Activated CD4-positive, alpha-beta memory T cell treated with anti-CD3 and anti-CD28 coated beads for 36 hours (primary cell): ENCODE measurements at regions of chr10 and their contacts with region 1.

Region 1: GRCh38 chr10:43348511-43349312 is 22.7 kb upstream of the FXYD4 start:
- DNase-seq: peak; percentile 92
- H3K4me3 Mint-ChIP-seq: no peak overlapping the region
- H3K27ac Mint-ChIP-seq: no peak overlapping the region
- H3K4me1 Mint-ChIP-seq: peaks cover 16% of the 10 kb centered on the region
- H3K27me3 Mint-ChIP-seq: peaks cover 12% of the 10 kb centered on the region

Region 2: DNA sequence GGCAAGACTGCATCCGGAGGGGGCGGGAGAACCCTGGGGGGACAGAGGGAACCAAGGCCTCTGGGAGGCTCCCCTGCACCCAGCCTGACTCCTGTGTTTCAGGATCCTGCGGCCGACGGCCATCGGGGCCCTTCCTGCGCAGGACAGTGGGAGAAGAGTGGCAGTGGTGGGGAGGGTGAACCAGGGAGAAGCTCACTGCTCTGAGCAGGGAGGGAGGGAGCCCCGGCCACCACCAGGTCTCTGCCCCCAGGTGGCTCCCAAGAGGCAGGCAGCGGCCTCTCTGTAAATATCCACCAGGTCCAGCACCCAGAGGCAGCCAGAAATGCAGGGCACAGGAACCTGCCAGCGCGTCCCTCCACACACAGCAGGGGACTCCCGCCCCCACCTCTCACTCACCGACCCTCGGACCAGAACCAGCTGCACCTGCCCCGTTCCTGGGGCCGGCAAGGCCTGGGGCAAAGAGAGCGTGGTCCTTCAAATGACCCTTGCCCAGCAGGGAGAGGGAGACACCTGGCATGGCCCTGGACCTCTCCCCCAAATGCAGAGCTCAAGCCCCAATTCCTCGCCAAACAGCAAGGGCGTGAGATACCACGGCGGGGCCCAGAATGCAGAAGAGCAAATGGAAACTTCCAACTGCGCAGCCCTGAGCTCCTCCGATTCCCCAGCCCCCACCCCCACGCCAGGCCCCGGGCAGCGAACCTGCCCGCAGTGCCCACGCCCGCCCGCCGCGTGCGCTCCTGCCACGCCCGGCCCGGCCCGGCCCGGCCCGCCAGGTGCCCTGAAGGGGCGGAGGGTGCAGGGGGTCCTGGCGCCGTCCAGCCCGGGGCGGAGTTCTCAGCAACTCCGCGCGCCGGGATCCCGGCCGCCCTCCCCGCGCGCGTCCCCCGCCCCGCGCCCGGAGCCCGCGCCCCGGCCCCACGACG is 82.7 kb before region 1 on chr10:
- CTCF ChIA-PET with region 1: interaction called, 21 read pairs
- POLR2A ChIA-PET with region 1: no interaction called
- intact Hi-C with region 1: loop called (anchors 1 kb)
- DNase-seq: peak; percentile 62
- H3K4me3 Mint-ChIP-seq: peak overlapping the region; percentile 67
- H3K27ac Mint-ChIP-seq: no peak overlapping the region
- H3K4me1 Mint-ChIP-seq: peaks cover 4% of the 10 kb centered on the region
- H3K27me3 Mint-ChIP-seq: peaks cover 25% of the 10 kb centered on the region

Region 3: DNA sequence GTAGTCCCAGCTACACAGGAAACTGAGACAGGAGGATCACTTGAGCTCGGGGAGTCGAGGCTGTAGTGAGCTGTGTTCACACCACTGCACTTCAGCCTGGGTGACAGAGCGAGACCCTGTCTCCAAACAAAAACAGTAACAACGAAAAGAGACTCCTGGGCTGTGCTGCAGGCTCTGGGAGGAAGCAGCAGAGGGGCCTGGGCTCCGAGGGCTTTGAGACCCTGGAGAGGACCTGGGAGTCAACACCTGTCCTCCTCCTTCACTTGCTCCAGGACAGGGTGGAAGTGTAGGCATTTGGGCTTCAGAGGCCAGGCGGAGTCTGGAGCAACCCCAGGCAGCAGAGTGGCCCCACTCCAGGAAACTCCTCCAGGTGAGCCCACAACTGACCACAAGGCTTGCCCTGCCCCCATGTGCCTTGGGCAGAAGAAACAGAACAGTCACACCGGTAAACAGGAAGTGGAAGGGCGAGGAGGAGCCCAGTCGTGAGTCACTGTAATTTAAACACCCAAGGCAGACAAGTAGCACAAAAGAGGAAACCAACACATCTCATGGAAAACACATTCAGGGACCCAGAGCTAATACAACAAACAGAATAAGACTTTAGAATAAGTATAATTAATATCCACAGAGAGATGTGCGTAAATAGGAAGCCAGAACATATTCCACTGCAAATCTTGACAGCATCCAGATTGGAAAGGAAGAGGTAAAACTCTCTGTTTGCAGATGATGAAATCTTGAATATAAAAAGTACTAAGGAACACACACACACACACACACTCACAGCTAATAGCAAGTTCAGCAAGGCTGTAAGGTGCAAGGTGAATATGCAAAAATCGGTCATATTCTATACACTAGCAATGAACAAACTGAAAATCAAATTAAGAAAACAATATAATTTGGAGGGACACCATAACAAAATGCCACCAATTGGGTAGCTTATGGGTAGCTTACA is 61.4 kb before region 1 on chr10:
- CTCF ChIA-PET with region 1: interaction called, 130 read pairs
- POLR2A ChIA-PET with region 1: interaction called, 3 read pairs
- intact Hi-C with region 1: loop called (anchors 1 kb)
- DNase-seq: peak; percentile 81
- H3K4me3 Mint-ChIP-seq: peak overlapping the region; percentile 10
- H3K27ac Mint-ChIP-seq: peak overlapping the region; percentile 75
- H3K4me1 Mint-ChIP-seq: peaks cover 43% of the 10 kb centered on the region
- H3K27me3 Mint-ChIP-seq: no peaks in the 10 kb centered on the region

Region 4: DNA sequence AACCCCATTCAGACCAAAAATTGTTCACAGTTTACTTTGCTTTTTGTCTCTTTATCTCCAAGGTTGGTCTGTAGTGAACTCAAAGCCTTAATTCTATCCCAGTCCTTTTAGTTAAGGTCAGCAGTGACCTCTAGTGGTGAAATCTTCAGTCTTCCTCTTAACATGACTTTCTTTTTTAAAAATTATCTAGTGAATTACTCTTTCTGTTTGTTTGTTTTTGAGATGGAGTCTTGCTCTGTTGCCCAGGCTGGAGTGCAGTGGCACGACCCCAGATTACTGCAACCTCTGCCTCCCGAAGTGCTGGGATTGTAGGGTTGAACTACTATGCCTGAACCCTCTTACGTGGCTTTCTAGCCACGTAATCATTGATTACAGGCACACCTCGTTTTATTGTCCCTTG is 113.2 kb after region 1 on chr10:
- CTCF ChIA-PET with region 1: interaction called, 4 read pairs
- POLR2A ChIA-PET with region 1: no interaction called
- intact Hi-C with region 1: loop called (anchors 1 kb)
- DNase-seq: no peak
- H3K4me3 Mint-ChIP-seq: no peak overlapping the region
- H3K27ac Mint-ChIP-seq: peak overlapping the region; percentile 54
- H3K4me1 Mint-ChIP-seq: peaks cover 18% of the 10 kb centered on the region
- H3K27me3 Mint-ChIP-seq: no peaks in the 10 kb centered on the region